Mammary epithelial cell (primary cell): ENCODE measurements at regions of chr17 and their contacts with region 1.

Region 1: GRCh38 chr17:7782237-7782636 is 51.8 kb upstream of the KDM6B start:
- DNase-seq: peak; percentile 32
- H3K4me3 ChIP-seq: no peak overlapping the region
- H3K27ac ChIP-seq: no peak overlapping the region
- H3K4me1 ChIP-seq: peaks cover 3% of the 10 kb centered on the region
- H3K27me3 ChIP-seq: no peaks in the 10 kb centered on the region
- CTCF ChIP-seq: peak; percentile 13 to 35

Region 2: DNA sequence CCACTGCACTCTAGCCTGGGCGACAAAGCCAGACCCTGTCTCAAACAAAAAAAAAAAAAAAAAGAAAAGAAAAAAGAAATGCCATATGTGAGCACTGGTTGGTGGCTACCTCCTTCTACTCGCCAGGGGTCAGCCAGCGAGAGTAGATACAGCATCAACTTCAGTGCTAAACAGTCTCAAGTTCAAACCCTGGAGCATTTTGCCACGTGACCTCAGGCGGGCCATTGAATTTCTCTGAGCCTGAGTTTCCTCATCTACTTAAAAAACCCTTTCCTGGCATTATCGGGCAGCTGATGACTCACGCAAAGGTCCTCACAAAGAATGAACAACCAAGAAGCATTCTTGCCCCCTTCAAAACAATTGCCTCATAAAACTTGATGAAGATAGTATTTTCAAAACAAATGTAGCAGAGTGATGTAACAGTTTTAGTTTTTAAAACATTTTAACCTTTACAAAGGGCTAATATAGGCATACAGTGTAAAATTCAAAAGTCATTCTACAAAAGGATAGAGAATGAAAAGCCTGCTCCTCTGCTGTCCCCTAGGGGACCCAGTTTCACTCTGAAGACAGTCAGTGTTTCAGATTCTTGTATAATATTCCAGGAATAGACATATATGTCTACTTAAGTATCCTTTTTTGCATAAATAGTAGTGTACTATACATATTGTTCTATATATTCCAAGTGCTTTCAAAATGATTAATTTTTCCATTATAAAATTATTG is 36.3 kb before region 1 on chr17:
- CTCF ChIA-PET with region 1: interaction called, 29 read pairs
- dilution Hi-C with region 1: no loop called
- in situ Hi-C with region 1: no loop called
- intact Hi-C with region 1: loop called (anchors 1 kb)
- DNase-seq: peak; percentile 60
- H3K4me3 ChIP-seq: no peak overlapping the region
- H3K27ac ChIP-seq: peak overlapping the region; percentile 12
- H3K4me1 ChIP-seq: peaks cover 45% of the 10 kb centered on the region
- H3K27me3 ChIP-seq: no peaks in the 10 kb centered on the region
- CTCF ChIP-seq: peak in 1 of 2 donors; percentile 13